ENCODE measurements at regions of chr2 and their contacts with region 1.

Region 1: DNA sequence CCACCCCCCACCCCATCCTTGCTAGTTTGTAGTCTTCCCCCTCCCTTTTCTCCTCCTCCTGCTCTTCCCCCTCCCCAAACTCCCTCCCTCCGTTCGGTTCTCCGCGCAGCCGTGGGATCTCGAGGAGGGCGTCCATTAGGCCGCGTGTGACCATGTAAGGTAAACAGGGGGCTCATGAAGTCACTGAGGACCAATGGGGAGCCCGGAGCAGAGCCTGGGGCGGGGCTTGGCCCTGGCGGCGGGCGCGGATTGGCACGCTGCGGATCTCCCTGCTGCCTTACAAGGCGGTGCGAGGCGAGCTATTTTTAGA is 246 bp upstream of the KLF7 start:
- DNase-seq: peak; percentile 98
- ATAC-seq: peak; percentile 94 to 96

Region 2: GRCh38 chr2:206981739-206982340 is 184.2 kb before region 1 on chr2:
- intact Hi-C with region 1: loop called (anchors 2 to 10 kb)
- DNase-seq: peak; percentile 77
- ATAC-seq: peak; percentile 90 to 94

Region 3: GRCh38 chr2:207073801-207074678 is 92.0 kb before region 1 on chr2:
- intact Hi-C with region 1: no loop called
- DNase-seq: no peak
- ATAC-seq: peak; percentile 45 to 54

Region 4: GRCh38 chr2:207086136-207086535 is 79.9 kb before region 1 on chr2:
- intact Hi-C with region 1: loop called in 1 of 2 experiments (anchors 5 kb)
- DNase-seq: no peak
- ATAC-seq: peak; percentile 32 to 60

Region 5: DNA sequence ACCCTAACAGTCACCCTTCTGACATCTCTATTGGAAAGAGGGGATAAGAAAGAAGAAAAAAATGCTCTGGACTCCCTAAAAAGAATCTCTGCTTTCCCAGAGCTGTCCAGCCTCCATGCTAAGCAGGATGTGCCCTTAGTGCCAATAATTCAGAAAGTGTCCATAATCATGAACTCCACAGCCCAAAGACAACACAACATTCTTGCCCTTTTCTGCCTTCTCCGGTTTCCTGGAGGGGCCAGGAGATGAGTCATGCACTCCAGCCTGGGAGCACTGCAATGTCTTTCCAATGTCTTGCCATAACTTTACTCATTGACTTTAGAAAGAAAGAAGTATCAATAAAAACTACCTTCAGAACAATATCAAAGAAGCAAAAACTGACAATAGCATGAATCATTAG is 44.2 kb before region 1 on chr2:
- intact Hi-C with region 1: loop called in 1 of 2 experiments (anchors 5 kb)
- DNase-seq: peak; percentile 38
- ATAC-seq: peak; percentile 67 to 85

Region 6: GRCh38 chr2:207223051-207223450 is 57.1 kb after region 1 on chr2:
- intact Hi-C with region 1: loop called in 1 of 2 experiments (anchors 5 kb)
- DNase-seq: no peak
- ATAC-seq: no peak

Region 7: DNA sequence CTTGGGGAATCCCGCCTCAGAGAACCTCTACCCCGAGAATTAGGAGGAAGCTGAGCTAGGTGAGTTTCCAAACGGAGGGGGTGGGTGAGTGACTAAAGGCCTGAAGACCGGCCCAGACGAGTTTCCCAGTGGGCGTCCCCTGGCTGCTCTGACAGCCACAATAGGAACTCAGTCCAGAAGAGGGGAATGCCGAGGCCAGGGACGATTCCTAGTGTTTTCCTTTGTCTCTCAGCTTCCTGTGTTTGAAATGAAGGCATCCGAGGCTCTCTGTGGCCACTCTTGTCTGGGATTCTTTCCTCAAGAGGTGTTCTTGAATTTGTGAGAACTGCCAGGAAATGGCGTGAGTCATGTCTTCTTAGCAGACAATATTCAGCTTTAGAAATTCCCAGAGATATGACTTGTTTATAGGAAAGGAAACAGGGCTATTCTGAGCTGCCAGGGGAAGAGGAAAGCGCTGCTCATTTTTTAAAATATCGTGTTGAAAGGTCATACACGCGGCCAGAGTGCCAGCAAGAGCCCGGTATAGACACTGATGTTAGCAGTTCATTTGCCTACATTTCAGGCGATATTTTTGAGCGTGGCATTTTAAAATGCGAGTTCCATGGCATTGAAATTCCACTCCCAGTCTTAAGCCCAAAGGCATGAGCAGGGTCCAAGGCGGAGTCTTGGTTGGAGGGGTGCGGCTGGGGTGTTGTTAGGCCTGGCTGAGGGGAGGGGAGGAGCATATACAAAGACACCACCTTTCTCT is 168.8 kb after region 1 on chr2:
- intact Hi-C with region 1: loop called in 1 of 2 experiments (anchors 5 kb)
- DNase-seq: peak; percentile 81
- ATAC-seq: peak; percentile 80 to 90